Panc1 (cell line): ENCODE measurements at regions of chrX and their contacts with region 1.

Region 1: GRCh38 chrX:118847676-118848075 is 24.1 kb downstream of the ZCCHC12 start:
- DNase-seq: peak; percentile 53
- ATAC-seq: peak; percentile 87
- H3K4me3 ChIP-seq: no peak overlapping the region
- H3K27ac ChIP-seq: no peak overlapping the region
- H3K4me1 ChIP-seq: no peaks in the 10 kb centered on the region
- H3K27me3 ChIP-seq: no peaks in the 10 kb centered on the region
- CTCF ChIP-seq: peak; percentile 70

Region 2: GRCh38 chrX:118795528-118796280 is 52.0 kb before region 1 on chrX:
- CTCF ChIA-PET with region 1: no interaction called
- POLR2A ChIA-PET with region 1: no interaction called
- in situ Hi-C with region 1: no loop called
- intact Hi-C with region 1: no loop called
- DNase-seq: no peak
- ATAC-seq: no peak
- H3K4me3 ChIP-seq: no peak overlapping the region
- H3K27ac ChIP-seq: no peak overlapping the region
- H3K4me1 ChIP-seq: no peaks in the 10 kb centered on the region
- H3K27me3 ChIP-seq: no peaks in the 10 kb centered on the region
- CTCF ChIP-seq: no peak

Region 3: GRCh38 chrX:119067023-119067739 is 219.5 kb after region 1 on chrX:
- CTCF ChIA-PET with region 1: interaction called, 4 read pairs
- POLR2A ChIA-PET with region 1: interaction called, 3 read pairs
- in situ Hi-C with region 1: no loop called
- intact Hi-C with region 1: loop called (anchors 1 kb)
- DNase-seq: peak; percentile 36
- ATAC-seq: peak; percentile 88
- H3K4me3 ChIP-seq: no peak overlapping the region
- H3K27ac ChIP-seq: 0 out of 2 replicates have a peak overlapping the region, but pooled peaks have one; percentile 49
- H3K4me1 ChIP-seq: peaks cover 4% of the 10 kb centered on the region; the same call in 1 of the 2 replicates
- H3K27me3 ChIP-seq: no peaks in the 10 kb centered on the region
- CTCF ChIP-seq: peak; percentile 79

Region 4: GRCh38 chrX:119211649-119212014 is 364.0 kb after region 1 on chrX:
- CTCF ChIA-PET with region 1: no interaction called
- POLR2A ChIA-PET with region 1: no interaction called
- in situ Hi-C with region 1: no loop called
- intact Hi-C with region 1: loop called (anchors 10 kb)
- DNase-seq: no peak
- ATAC-seq: no peak
- H3K4me3 ChIP-seq: no peak overlapping the region
- H3K27ac ChIP-seq: no peak overlapping the region
- H3K4me1 ChIP-seq: no peaks in the 10 kb centered on the region
- H3K27me3 ChIP-seq: peaks cover 22% of the 10 kb centered on the region
- CTCF ChIP-seq: no peak